GM10248 (cell line): ENCODE measurements at regions of chr9 and their contacts with region 1.

Region 1: GRCh38 chr9:94213511-94214124 is 45.5 kb upstream of the ZNF169 start:
- DNase-seq: peak; percentile 84
- CTCF ChIP-seq: peak; percentile 74

Region 2: GRCh38 chr9:94065535-94065961 is 148.1 kb before region 1 on chr9:
- CTCF ChIA-PET with region 1: interaction called, 246 read pairs
- POLR2A ChIA-PET with region 1: no interaction called
- DNase-seq: peak; percentile 63
- CTCF ChIP-seq: peak; percentile 68

Region 3: GRCh38 chr9:94110821-94111252 is 102.8 kb before region 1 on chr9:
- CTCF ChIA-PET with region 1: no interaction called
- POLR2A ChIA-PET with region 1: no interaction called
- DNase-seq: no peak
- CTCF ChIP-seq: no peak

Region 4: GRCh38 chr9:94166237-94166963 is 47.2 kb before region 1 on chr9:
- CTCF ChIA-PET with region 1: interaction called, 14 read pairs
- POLR2A ChIA-PET with region 1: no interaction called
- DNase-seq: peak; percentile 94
- CTCF ChIP-seq: peak; percentile 21

Region 5: GRCh38 chr9:94188246-94188645 is 25.4 kb before region 1 on chr9:
- CTCF ChIA-PET with region 1: interaction called, 12 read pairs
- POLR2A ChIA-PET with region 1: no interaction called
- DNase-seq: no peak
- CTCF ChIP-seq: no peak

Region 6: DNA sequence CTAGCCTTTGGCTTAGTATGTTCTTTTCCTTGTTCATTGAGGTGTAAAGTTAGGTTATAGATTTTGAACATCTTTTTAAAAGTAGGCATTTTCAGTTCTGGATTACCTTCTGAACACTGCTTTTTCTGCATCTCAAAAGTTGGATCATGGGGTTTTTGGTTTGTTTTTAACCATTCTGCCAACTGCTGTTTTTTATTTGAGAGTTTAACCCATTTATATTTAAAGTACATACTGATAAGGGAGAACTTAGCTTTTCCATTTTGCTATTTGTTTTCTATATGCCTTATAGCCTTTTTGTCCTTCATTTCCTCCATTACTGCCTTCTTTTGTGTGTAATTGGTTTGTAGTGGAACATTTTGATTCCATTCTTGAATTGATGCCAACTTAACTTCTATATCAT is 15.0 kb after region 1 on chr9:
- CTCF ChIA-PET with region 1: interaction called, 14 read pairs
- POLR2A ChIA-PET with region 1: no interaction called
- DNase-seq: no peak
- CTCF ChIP-seq: no peak

Region 7: DNA sequence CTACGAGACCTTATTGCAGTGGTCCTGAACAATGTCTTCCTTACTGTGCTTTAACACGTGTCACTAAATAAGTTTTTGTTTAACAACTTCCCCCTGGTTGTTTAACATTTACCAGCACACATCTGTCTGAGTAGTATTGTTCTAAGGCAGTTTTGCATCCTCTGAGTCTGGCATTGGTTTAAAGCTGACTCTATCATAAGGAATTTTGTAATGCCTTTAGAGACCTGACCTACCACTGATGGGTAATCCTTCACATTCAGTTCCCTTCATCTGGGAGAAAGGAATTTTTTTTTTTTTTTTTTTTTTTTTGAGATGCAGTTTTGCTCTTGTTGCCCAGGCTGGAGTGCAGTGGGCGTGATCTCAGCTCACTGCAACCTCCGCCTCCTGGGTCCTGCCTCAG is 321.3 kb after region 1 on chr9:
- CTCF ChIA-PET with region 1: no interaction called
- POLR2A ChIA-PET with region 1: no interaction called
- DNase-seq: no peak
- CTCF ChIP-seq: no peak

Region 8: DNA sequence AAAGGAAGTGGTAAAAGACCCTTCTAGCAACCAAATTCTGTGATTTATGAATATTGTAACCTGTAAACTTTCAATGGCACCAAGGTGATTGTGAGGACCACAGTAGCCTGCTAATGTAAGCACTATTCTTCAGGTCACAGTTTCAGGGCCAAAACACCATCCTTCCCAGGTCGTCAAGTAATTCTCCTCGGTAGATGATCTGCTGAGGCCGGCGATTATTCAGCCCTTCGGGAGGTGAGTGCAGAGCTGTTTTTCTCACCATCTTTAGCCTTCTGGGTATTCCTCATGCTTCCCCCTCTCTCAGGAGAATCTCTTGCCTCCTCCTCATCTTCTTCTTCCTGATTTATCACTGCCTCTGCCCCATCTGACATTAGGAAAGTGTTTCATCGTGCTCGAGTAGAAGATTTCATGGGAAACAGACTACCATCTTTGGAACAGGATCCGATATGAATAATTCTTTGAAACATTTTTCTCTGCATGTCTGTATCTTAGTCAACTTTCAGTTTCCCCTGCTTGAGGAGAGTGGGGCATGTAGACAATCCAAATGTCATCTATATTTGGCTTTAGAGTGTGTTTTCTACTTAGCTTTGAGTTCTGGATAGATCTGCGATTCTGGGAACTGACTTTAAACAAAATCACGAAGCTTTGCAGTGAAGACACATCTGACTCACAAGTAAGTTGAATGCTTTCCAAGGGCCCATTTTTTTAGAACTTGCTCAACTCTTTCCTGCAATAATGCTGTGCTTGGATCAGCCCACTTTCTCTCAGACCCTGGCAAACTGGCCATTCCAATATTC is 686.8 kb after region 1 on chr9:
- CTCF ChIA-PET with region 1: no interaction called
- POLR2A ChIA-PET with region 1: no interaction called
- DNase-seq: no peak
- CTCF ChIP-seq: no peak